ENCODE measurements at regions of chr11 and their contacts with region 1.

Region 1: GRCh38 chr11:59542142-59542810 is 30.9 kb downstream of the OR4D9 start:
- DNase-seq: no peak
- H3K4me3 ChIP-seq: no peak overlapping the region
- H3K4me3 Mint-ChIP-seq: no peak overlapping the region
- H3K27ac ChIP-seq: no peak overlapping the region
- H3K27ac Mint-ChIP-seq: no peak overlapping the region
- H3K4me1 ChIP-seq: peaks cover 4% of the 10 kb centered on the region
- H3K4me1 Mint-ChIP-seq: peaks cover 4 to 9% (median 5%) of the 10 kb centered on the region in 4 donors
- H3K27me3 ChIP-seq: no peaks in the 10 kb centered on the region
- H3K27me3 Mint-ChIP-seq: no peaks in the 10 kb centered on the region

Region 2: GRCh38 chr11:59224351-59224928 is 317.8 kb before region 1 on chr11:
- CTCF ChIA-PET with region 1: no interaction called
- POLR2A ChIA-PET with region 1: no interaction called
- intact Hi-C with region 1: no loop called
- DNase-seq: no peak
- H3K4me3 ChIP-seq: no peak overlapping the region
- H3K4me3 Mint-ChIP-seq: peak overlapping the region in 1 of 8 donors; percentile 11
- H3K27ac ChIP-seq: no peak overlapping the region
- H3K27ac Mint-ChIP-seq: no peak overlapping the region
- H3K4me1 ChIP-seq: no peaks in the 10 kb centered on the region
- H3K4me1 Mint-ChIP-seq: peaks cover 0 to 9% (median 6%) of the 10 kb centered on the region in 4 donors
- H3K27me3 ChIP-seq: no peaks in the 10 kb centered on the region
- H3K27me3 Mint-ChIP-seq: peaks cover 2 to 5% of the 10 kb centered on the region in 2 donors

Region 3: DNA sequence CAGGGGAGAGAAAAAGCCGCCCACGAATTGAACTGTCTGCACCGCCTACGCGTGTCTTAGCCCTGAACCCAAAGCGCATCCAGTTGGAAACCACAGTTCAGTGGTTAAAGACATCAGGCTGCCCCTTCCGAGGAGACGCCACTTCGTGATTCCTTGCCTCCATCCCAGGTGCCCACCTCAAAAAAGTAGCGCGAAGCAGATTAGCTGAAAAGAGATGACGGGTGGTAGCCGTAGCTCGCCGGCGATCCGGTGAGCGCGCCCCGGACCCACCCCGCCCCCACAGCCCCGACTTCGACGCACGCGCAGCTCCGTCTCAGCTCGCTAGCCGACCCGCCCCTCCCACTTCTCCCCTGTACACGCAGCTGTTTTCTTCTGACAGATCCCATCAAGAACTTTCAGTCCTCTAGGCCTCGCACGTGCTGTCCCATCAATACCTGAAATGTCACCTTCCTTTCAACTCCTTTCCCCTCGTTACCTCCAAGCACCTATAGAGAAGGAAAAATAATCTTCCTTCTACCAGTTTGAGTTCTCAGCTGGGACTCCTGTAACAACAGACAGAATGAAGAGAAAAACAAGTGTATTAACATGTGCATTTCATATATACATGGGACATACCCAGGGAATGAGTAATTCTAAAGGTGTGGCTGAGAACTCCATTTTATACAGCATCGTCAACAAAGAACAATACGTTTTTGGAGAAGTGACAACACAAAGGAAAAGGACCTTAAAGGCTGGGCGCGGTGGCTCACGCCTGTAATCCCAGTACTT is 18.6 kb after region 1 on chr11:
- CTCF ChIA-PET with region 1: interaction called, 12 read pairs
- POLR2A ChIA-PET with region 1: interaction called, 18 read pairs
- intact Hi-C with region 1: no loop called
- DNase-seq: peak; percentile 75 to 86 (median 77)
- H3K4me3 ChIP-seq: peak overlapping the region; percentile 83 to 87
- H3K4me3 Mint-ChIP-seq: peak overlapping the region; percentile 93 to 99 (median 96)
- H3K27ac ChIP-seq: peak overlapping the region; percentile 58
- H3K27ac Mint-ChIP-seq: peak overlapping the region; percentile 91 to 100 (median 98)
- H3K4me1 ChIP-seq: peaks cover 21% of the 10 kb centered on the region
- H3K4me1 Mint-ChIP-seq: peaks cover 27 to 53% (median 39%) of the 10 kb centered on the region in 4 donors
- H3K27me3 ChIP-seq: no peaks in the 10 kb centered on the region
- H3K27me3 Mint-ChIP-seq: peaks cover 2 to 5% of the 10 kb centered on the region in 2 donors

Region 4: DNA sequence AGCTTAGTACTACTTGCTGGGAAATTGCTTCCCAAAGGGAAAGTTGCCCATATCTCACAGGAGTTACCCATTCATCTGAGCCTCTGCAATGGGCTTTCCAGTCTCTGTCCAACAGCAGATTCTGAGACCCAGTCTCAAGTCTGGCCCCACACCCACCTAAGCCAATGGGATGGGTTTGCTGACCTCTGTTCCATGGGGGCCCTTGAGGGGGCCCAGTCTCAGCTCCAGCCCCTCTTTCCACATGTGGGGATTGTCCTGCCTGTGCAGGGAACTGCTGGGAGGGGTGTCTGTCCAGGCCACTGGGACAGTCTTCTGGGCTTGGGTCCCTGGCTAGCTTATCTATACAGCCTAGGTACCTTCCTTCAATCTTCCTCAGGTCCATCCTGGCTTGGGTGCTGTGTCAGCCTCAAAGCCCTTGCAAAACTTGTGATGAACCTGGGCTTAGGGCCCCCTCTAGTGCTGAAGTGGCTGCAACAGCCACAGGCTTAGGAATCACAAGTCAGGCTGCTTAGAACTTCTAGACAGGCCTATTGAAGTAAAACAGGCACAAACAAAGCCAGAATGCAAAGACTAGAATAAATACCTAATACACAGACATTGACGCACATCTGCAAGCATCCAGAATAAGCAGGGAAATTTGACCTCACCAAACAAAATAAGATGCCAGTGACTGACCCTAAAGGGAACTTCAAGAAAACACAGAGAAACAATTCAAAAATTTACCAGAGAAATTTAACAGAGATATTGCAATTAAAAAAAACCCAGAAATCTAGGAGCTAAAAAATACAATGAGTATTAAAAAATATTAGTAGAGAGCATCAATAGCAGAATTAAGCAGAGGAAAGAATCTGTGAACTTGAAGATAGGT is 138.2 kb after region 1 on chr11:
- CTCF ChIA-PET with region 1: interaction called, 23 read pairs
- POLR2A ChIA-PET with region 1: no interaction called
- intact Hi-C with region 1: loop called (anchors 1 kb)
- DNase-seq: peak; percentile 48 to 57 (median 52)
- H3K4me3 ChIP-seq: no peak overlapping the region
- H3K4me3 Mint-ChIP-seq: no peak overlapping the region
- H3K27ac ChIP-seq: no peak overlapping the region
- H3K27ac Mint-ChIP-seq: no peak overlapping the region
- H3K4me1 ChIP-seq: no peaks in the 10 kb centered on the region
- H3K4me1 Mint-ChIP-seq: no peaks in the 10 kb centered on the region
- H3K27me3 ChIP-seq: no peaks in the 10 kb centered on the region
- H3K27me3 Mint-ChIP-seq: peaks cover 8 to 12% of the 10 kb centered on the region in 2 donors

Region 5: GRCh38 chr11:59802639-59803176 is 260.4 kb after region 1 on chr11:
- CTCF ChIA-PET with region 1: interaction called, 15 read pairs
- POLR2A ChIA-PET with region 1: no interaction called
- intact Hi-C with region 1: loop called (anchors 1 kb)
- DNase-seq: peak; percentile 60 to 70 (median 64)
- H3K4me3 ChIP-seq: no peak overlapping the region
- H3K4me3 Mint-ChIP-seq: no peak overlapping the region
- H3K27ac ChIP-seq: no peak overlapping the region
- H3K27ac Mint-ChIP-seq: peak overlapping the region in 2 of 7 donors; percentile 10 to 34
- H3K4me1 ChIP-seq: no peaks in the 10 kb centered on the region
- H3K4me1 Mint-ChIP-seq: no peaks in the 10 kb centered on the region
- H3K27me3 ChIP-seq: no peaks in the 10 kb centered on the region
- H3K27me3 Mint-ChIP-seq: no peaks in the 10 kb centered on the region

Measured in CD4-positive, alpha-beta memory T cell (primary cell).